Heart left ventricle (tissue), 16 donors: ENCODE measurements at regions of chr15 and their contacts with region 1.

Region 1: GRCh38 chr15:84658080-84658787 is at the start of gene NMB:
- DNase-seq: peak; percentile 78 to 88 (median 83)
- ATAC-seq: peak; percentile 36 to 72 (median 66)
- H3K4me3 ChIP-seq: peak within 1 kb of the TSS; percentile 6 to 87 (median 70)
- H3K27ac ChIP-seq: peak within 1 kb of the TSS; percentile 16 to 90 (median 78)
- H3K4me1 ChIP-seq: peaks cover 0 to 40% (median 20%) of the 10 kb centered on the region in 12 donors
- H3K27me3 ChIP-seq: no peaks in the 10 kb centered on the region
- CTCF ChIP-seq: peak; percentile 32 to 84 (median 52)
- POLR2A ChIP-seq: peak in 1 of 2 donors; percentile 49
- total RNA-seq, gene NMB: 1.4 to 8.6 (median 2.8) TPM

Region 2: GRCh38 chr15:84588053-84588874 is 70.0 kb before region 1 on chr15:
- intact Hi-C with region 1: loop called in 2 of 10 experiments (anchors 5 kb)
- DNase-seq: peak; percentile 84 to 92 (median 87)
- ATAC-seq: peak; percentile 98 to 99 (median 99)
- H3K4me3 ChIP-seq: peak overlapping the region in 10 of 12 donors; percentile 25 to 58 (median 44)
- H3K27ac ChIP-seq: no peak overlapping the region
- H3K4me1 ChIP-seq: peaks cover 0 to 10% (median 3%) of the 10 kb centered on the region in 12 donors
- H3K27me3 ChIP-seq: no peaks in the 10 kb centered on the region
- CTCF ChIP-seq: peak; percentile 82 to 98 (median 90)
- POLR2A ChIP-seq: no peak

Region 3: GRCh38 chr15:84633311-84634227 is 24.7 kb before region 1 on chr15:
- intact Hi-C with region 1: loop called in 3 of 10 experiments (anchors 1 to 2 kb)
- DNase-seq: peak; percentile 69 to 90 (median 80)
- ATAC-seq: peak; percentile 22 to 81 (median 61)
- H3K4me3 ChIP-seq: peak overlapping the region; percentile 53 to 85 (median 77)
- H3K27ac ChIP-seq: peak overlapping the region; percentile 91 to 99 (median 98)
- H3K4me1 ChIP-seq: peaks cover 3 to 54% (median 33%) of the 10 kb centered on the region in 12 donors
- H3K27me3 ChIP-seq: no peaks in the 10 kb centered on the region
- CTCF ChIP-seq: peak in 1 of 12 donors; percentile 9
- POLR2A ChIP-seq: peak in 1 of 2 donors; percentile 43

Region 4: GRCh38 chr15:84716036-84716799 is 58.0 kb after region 1 on chr15 and contains the start of gene SEC11A:
- intact Hi-C with region 1: loop called in 4 of 10 experiments (anchors 2 to 10 kb)
- DNase-seq: peak; percentile 95 to 98 (median 96)
- ATAC-seq: peak; percentile 98 to 99 (median 98)
- H3K4me3 ChIP-seq: peak within 1 kb of the TSS; percentile 58 to 98 (median 82)
- H3K27ac ChIP-seq: peak within 1 kb of the TSS; percentile 86 to 99 (median 94)
- H3K4me1 ChIP-seq: peaks cover 8 to 52% (median 25%) of the 10 kb centered on the region in 12 donors
- H3K27me3 ChIP-seq: no peaks in the 10 kb centered on the region
- CTCF ChIP-seq: no peak
- POLR2A ChIP-seq: peak in 1 of 2 donors; percentile 76
- total RNA-seq, gene SEC11A: 55.7 to 95.7 (median 73.0) TPM

Region 5: DNA sequence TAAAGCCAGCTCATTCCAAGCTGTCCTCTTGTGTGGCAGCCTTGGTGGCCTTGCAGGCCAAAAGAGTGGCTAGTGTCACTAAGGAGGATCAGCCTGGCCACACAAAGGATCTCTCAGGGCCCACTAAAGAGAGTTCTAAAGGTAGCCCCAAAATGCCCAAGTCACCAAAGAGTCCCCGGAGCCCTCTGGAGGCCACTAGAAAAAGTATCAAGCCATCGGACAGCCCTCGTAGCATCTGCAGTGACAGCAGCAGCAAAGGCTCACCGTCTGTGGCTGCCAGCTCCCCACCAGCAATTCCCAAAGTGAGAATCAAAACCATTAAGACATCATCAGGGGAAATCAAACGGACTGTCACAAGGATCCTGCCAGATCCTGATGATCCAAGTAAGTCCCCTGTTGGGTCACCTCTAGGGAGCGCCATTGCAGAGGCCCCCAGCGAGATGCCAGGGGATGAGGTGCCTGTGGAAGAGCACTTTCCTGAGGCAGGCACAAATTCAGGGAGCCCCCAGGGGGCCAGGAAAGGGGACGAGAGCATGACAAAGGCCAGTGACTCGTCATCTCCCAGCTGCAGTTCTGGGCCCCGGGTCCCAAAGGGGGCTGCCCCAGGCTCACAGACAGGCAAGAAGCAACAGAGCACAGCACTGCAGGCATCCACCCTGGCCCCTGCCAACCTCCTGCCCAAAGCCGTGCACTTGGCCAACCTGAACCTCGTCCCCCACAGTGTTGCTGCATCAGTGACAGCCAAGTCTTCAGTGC is 125.4 kb after region 1 on chr15:
- intact Hi-C with region 1: no loop called
- DNase-seq: no peak
- ATAC-seq: no peak
- H3K4me3 ChIP-seq: no peak overlapping the region
- H3K27ac ChIP-seq: no peak overlapping the region
- H3K4me1 ChIP-seq: peaks cover 3 to 55% (median 35%) of the 10 kb centered on the region in 12 donors
- H3K27me3 ChIP-seq: no peaks in the 10 kb centered on the region
- CTCF ChIP-seq: no peak
- POLR2A ChIP-seq: no peak

Region 6: DNA sequence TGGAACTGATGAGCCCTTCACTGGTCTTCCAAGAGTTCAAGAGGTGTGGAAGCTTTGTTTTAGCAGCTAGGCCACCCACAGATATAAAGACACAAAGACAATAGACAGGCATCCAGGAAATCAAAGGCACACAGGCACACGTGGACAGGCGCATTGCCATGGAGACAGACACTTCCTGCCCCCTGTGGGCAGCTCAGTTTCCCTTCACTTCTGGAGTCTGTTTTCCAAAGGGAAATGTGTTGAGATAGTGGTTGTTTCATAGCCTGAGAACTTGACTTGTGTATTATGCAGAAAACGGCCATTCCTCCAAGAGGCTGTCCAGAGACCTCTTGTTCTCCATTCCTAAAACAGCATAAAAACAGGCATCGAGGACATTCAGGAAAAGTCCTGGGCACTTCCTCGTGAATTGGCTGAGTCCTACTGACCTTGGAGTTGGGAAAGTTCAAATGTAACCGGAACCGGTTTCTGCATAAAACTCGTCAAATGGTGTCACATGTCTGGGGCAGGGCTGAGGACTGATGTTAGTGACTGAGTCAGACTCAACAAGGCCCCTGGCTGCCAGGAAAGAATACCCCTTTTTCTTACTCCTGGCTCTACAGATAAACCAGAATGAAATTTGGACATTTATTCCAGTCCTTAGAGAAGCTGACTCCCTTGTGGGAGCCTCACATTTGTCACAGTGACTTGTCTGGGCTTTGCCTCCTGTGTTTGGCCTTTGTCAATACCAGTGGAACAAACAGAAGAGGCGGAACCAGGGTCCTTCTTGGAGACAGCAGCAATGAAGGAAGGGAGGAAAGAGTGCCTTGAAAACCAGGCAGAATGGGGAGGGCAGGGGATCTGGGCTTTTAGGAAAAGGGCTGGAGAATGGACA is 160.3 kb after region 1 on chr15:
- intact Hi-C with region 1: loop called (anchors 1 to 10 kb)
- DNase-seq: peak in 4 of 5 donors; percentile 62 to 77 (median 66)
- ATAC-seq: peak; percentile 3 to 46 (median 24)
- H3K4me3 ChIP-seq: peak overlapping the region; percentile 35 to 93 (median 72)
- H3K27ac ChIP-seq: peak overlapping the region; percentile 93 to 99 (median 96)
- H3K4me1 ChIP-seq: peaks cover 11 to 78% (median 68%) of the 10 kb centered on the region in 12 donors
- H3K27me3 ChIP-seq: no peaks in the 10 kb centered on the region
- CTCF ChIP-seq: peak in 3 of 12 donors; percentile 28 to 35 (median 29)
- POLR2A ChIP-seq: no peak

Region 7: DNA sequence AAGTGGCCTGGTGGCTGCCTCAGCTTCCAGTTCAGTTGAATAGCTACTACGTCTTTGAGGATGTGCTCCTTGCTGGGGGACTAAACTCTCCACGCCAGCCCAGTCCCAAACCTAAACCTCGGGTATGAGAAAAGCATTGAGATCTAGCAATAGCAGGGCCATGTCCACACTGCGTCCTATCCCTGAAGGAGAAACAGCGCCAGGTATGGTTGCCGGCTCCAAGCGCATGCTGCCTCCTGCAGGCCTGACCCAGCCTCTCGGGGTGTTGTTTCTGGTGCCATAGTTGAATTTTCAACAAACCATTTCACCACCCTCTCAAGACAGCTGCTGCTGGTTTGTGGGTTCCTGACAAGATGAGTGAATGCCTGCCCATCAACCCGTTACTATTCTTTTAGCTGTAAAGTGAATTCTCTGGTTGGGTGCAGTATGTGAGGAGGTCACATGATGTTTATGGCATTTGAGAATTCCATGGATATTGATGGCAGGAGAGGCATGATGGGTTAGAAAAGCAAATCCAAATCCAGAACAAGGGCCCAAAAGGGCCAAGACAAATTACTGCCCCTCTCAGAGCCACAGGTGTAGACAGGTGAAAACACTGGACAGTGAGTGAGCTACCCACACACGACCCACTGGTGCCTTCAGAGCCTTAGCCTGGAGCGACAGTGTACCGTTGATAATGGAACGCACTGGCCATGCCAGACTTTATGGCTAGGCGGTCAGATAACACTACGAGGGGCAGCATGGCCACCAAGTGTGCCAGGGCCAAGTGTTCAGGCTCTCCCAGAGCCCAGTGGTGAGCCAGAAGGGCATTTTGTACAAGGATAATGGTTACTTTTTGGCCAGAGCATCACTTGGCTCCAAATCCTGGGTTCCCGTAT is 213.4 kb after region 1 on chr15:
- intact Hi-C with region 1: loop called in 1 of 10 experiments (anchors 10 kb)
- DNase-seq: no peak
- ATAC-seq: peak; percentile 13 to 21 (median 15)
- H3K4me3 ChIP-seq: no peak overlapping the region
- H3K27ac ChIP-seq: peak overlapping the region in 1 of 12 donors; percentile 17
- H3K4me1 ChIP-seq: peaks cover 0 to 12% (median 0%) of the 10 kb centered on the region in 12 donors
- H3K27me3 ChIP-seq: no peaks in the 10 kb centered on the region
- CTCF ChIP-seq: peak in 3 of 12 donors; percentile 4 to 16 (median 16)
- POLR2A ChIP-seq: no peak